ENCODE measurements at regions of chr10 and their contacts with region 1.

Region 1: GRCh38 chr10:70478191-70479164 is at the start of gene PALD1:
- DNase-seq: peak; percentile 49
- H3K4me3 Mint-ChIP-seq: peak within 1 kb of the TSS; percentile 65
- H3K27ac Mint-ChIP-seq: peak within 1 kb of the TSS; percentile 55
- H3K4me1 Mint-ChIP-seq: peaks cover 32% of the 10 kb centered on the region
- H3K27me3 Mint-ChIP-seq: peaks cover 10% of the 10 kb centered on the region
- total RNA-seq, gene PALD1: 0.41 to 0.48 TPM

Region 2: GRCh38 chr10:70504521-70505358 is 26.3 kb after region 1 on chr10:
- CTCF ChIA-PET with region 1: no interaction called
- POLR2A ChIA-PET with region 1: no interaction called
- intact Hi-C with region 1: no loop called
- DNase-seq: no peak
- H3K4me3 Mint-ChIP-seq: no peak overlapping the region
- H3K27ac Mint-ChIP-seq: no peak overlapping the region
- H3K4me1 Mint-ChIP-seq: no peaks in the 10 kb centered on the region
- H3K27me3 Mint-ChIP-seq: no peaks in the 10 kb centered on the region

Region 3: GRCh38 chr10:70815504-70816219 is 337.2 kb after region 1 on chr10 and contains the start of gene SGPL1:
- CTCF ChIA-PET with region 1: no interaction called
- POLR2A ChIA-PET with region 1: no interaction called
- intact Hi-C with region 1: loop called (anchors 5 kb)
- DNase-seq: peak; percentile 90
- H3K4me3 Mint-ChIP-seq: peak within 1 kb of the TSS; percentile 86
- H3K27ac Mint-ChIP-seq: peak within 1 kb of the TSS; percentile 82
- H3K4me1 Mint-ChIP-seq: peaks cover 49% of the 10 kb centered on the region
- H3K27me3 Mint-ChIP-seq: no peaks in the 10 kb centered on the region
- total RNA-seq, gene SGPL1: 65.6 to 67.0 TPM